ENCODE measurements at regions of chr4 and their contacts with region 1.

Region 1: DNA sequence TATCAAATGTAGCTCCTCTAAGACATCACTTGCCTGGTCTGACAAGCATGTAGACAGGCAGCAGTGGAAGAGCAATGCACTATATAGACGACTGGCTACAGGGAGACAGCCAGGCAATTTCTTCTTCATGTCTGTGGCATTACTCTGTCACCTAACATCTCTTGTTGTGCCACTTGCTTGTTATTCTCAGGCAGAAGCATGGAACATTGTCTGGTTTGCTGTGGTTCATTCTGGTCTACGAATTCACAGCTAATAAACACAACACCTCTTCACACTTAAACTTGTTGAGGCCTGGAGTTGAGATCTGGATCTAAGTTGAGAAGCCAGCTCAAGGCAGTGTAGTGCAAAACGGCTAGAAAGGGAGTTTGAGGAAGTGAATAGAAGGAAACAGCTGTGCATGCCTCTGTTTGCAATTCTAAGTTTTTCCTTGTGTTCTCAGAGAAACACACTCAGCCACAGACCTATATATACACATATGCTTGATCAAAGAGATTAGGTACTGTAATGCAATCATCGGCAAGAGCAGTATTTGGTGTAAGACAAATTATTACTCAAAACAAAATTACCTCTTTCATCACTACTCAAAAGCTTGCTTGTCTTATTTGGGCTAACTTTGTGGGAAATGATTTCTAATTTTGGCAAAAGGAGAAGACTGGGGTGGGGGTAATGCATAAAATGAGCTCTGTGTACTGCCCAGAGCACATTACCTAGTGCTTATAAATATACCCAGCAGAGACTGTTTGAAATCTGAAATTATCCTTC is 243.8 kb downstream of the PPP3CA start:
- DNase-seq: no peak
- ATAC-seq: peak; percentile 70
- H3K4me3 Mint-ChIP-seq: peak overlapping the region; percentile 39
- H3K27ac Mint-ChIP-seq: peak overlapping the region; percentile 85
- H3K4me1 Mint-ChIP-seq: peaks cover 47% of the 10 kb centered on the region
- H3K27me3 Mint-ChIP-seq: no peaks in the 10 kb centered on the region
- CTCF ChIP-seq: no peak

Region 2: DNA sequence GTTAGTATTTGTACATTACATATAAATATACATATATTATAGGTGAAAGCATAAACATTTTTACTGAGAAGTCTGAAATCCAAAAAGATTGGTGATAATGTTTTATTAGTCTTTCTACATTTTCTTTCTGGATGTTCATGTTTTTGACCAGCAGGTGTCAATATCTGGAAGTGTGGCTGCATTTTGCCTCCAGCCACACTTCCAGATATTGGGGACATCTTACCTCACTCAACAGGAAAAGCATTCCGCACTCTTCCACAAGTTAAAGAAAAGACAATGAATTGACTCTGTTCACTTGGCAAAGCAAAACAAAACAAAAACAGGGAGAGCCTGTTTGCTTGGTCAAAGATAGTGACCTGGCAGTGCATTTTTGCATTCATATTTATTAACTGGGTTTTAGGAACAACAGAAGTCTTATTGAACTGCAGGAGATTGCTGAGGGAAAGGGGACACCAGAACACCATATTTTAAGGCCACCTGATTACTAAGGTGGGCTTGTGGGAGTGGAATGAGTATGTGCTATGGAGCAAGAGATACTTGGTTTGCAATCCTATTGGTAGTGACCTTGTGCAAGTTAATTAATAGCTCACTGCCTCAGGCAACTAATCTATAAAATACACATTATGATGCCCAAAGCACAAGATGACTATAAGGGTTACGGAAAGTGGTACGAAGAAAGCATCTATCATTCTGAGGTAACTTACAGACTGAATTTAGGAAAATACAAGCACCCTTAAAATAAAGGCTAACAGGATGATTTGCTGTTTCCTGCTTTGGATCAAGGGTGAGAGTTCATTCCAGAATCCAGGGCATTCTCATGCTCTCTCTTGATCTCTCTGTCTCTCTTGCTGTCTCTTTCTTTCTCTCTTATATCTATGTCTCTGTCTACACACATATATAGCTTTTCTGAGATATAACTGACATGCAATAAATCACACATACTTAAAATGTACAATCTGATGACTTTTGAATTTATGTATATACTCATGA is 195.8 kb before region 1 on chr4:
- CTCF ChIA-PET with region 1: no interaction called
- POLR2A ChIA-PET with region 1: no interaction called
- intact Hi-C with region 1: no loop called
- DNase-seq: no peak
- ATAC-seq: no peak
- H3K4me3 Mint-ChIP-seq: no peak overlapping the region
- H3K27ac Mint-ChIP-seq: no peak overlapping the region
- H3K4me1 Mint-ChIP-seq: no peaks in the 10 kb centered on the region
- H3K27me3 Mint-ChIP-seq: no peaks in the 10 kb centered on the region
- CTCF ChIP-seq: no peak

Region 3: GRCh38 chr4:101127176-101127790 is 23.7 kb after region 1 on chr4:
- CTCF ChIA-PET with region 1: no interaction called
- POLR2A ChIA-PET with region 1: interaction called, 4 read pairs
- intact Hi-C with region 1: loop called (anchors 2 kb)
- DNase-seq: no peak
- ATAC-seq: peak; percentile 84
- H3K4me3 Mint-ChIP-seq: peak overlapping the region; percentile 25
- H3K27ac Mint-ChIP-seq: peak overlapping the region; percentile 46
- H3K4me1 Mint-ChIP-seq: peaks cover 81% of the 10 kb centered on the region
- H3K27me3 Mint-ChIP-seq: no peaks in the 10 kb centered on the region
- CTCF ChIP-seq: no peak

Region 4: GRCh38 chr4:101135371-101136010 is 31.9 kb after region 1 on chr4:
- CTCF ChIA-PET with region 1: no interaction called
- POLR2A ChIA-PET with region 1: no interaction called
- intact Hi-C with region 1: loop called (anchors 5 kb)
- DNase-seq: no peak
- ATAC-seq: no peak
- H3K4me3 Mint-ChIP-seq: peak overlapping the region; percentile 70
- H3K27ac Mint-ChIP-seq: peak overlapping the region; percentile 43
- H3K4me1 Mint-ChIP-seq: peaks cover 76% of the 10 kb centered on the region
- H3K27me3 Mint-ChIP-seq: no peaks in the 10 kb centered on the region
- CTCF ChIP-seq: no peak

Region 5: GRCh38 chr4:101163936-101164335 is 60.4 kb after region 1 on chr4:
- CTCF ChIA-PET with region 1: interaction called, 4 read pairs
- POLR2A ChIA-PET with region 1: no interaction called
- intact Hi-C with region 1: loop called (anchors 2 kb)
- DNase-seq: no peak
- ATAC-seq: no peak
- H3K4me3 Mint-ChIP-seq: no peak overlapping the region
- H3K27ac Mint-ChIP-seq: peak overlapping the region; percentile 57
- H3K4me1 Mint-ChIP-seq: peaks cover 26% of the 10 kb centered on the region
- H3K27me3 Mint-ChIP-seq: no peaks in the 10 kb centered on the region
- CTCF ChIP-seq: no peak

Region 6: DNA sequence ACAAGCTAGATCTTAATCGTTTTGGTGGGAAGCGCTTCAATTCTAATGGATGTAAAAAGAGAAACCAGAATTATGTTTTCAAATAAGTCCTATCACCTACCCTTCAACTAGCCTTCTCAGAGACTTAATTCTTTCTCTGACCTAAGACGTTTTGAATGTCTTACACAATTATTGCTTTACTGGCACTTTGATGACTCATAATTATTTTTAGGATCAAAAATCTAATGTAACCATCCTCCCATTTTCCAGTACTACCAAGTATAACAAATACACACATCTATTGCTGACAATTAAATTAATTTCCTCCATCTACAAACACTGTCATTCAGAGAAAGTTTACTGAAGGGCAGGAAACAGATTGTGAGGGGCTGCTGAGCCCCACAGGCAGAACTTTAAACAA is 135.1 kb after region 1 on chr4:
- CTCF ChIA-PET with region 1: no interaction called
- POLR2A ChIA-PET with region 1: no interaction called
- intact Hi-C with region 1: no loop called
- DNase-seq: no peak
- ATAC-seq: no peak
- H3K4me3 Mint-ChIP-seq: no peak overlapping the region
- H3K27ac Mint-ChIP-seq: no peak overlapping the region
- H3K4me1 Mint-ChIP-seq: peaks cover 71% of the 10 kb centered on the region
- H3K27me3 Mint-ChIP-seq: no peaks in the 10 kb centered on the region
- CTCF ChIP-seq: no peak

Region 7: GRCh38 chr4:101393250-101393649 is 289.7 kb after region 1 on chr4:
- CTCF ChIA-PET with region 1: no interaction called
- POLR2A ChIA-PET with region 1: no interaction called
- intact Hi-C with region 1: no loop called
- DNase-seq: no peak
- ATAC-seq: no peak
- H3K4me3 Mint-ChIP-seq: no peak overlapping the region
- H3K27ac Mint-ChIP-seq: no peak overlapping the region
- H3K4me1 Mint-ChIP-seq: no peaks in the 10 kb centered on the region
- H3K27me3 Mint-ChIP-seq: no peaks in the 10 kb centered on the region
- CTCF ChIP-seq: no peak

Measured in activated B cell treated with CpG ODN at 0.5 μM for 24 hours (primary cell).